Activated CD8-positive, alpha-beta T cell treated with anti-CD3 and anti-CD28 coated beads, Interleukin-2, amount 10 ng/mL, durations not matched to agents 7 days and 5 days (primary cell): ENCODE measurements at regions of chr17 and their contacts with region 1.

Region 1: GRCh38 chr17:36534840-36535668 is at the starts of genes MYO19 and PIGW:
- DNase-seq: peak; percentile 89
- ATAC-seq: peak; percentile 85
- H3K4me3 Mint-ChIP-seq: peak within 1 kb of the TSS; percentile 98
- H3K27ac Mint-ChIP-seq: peak within 1 kb of the TSS; percentile 99
- H3K4me1 Mint-ChIP-seq: peaks cover 47% of the 10 kb centered on the region
- H3K27me3 Mint-ChIP-seq: no peaks in the 10 kb centered on the region
- total RNA-seq, gene MYO19: 136 to 142 TPM
- total RNA-seq, gene PIGW: 8.0 to 11.7 TPM

Region 2: DNA sequence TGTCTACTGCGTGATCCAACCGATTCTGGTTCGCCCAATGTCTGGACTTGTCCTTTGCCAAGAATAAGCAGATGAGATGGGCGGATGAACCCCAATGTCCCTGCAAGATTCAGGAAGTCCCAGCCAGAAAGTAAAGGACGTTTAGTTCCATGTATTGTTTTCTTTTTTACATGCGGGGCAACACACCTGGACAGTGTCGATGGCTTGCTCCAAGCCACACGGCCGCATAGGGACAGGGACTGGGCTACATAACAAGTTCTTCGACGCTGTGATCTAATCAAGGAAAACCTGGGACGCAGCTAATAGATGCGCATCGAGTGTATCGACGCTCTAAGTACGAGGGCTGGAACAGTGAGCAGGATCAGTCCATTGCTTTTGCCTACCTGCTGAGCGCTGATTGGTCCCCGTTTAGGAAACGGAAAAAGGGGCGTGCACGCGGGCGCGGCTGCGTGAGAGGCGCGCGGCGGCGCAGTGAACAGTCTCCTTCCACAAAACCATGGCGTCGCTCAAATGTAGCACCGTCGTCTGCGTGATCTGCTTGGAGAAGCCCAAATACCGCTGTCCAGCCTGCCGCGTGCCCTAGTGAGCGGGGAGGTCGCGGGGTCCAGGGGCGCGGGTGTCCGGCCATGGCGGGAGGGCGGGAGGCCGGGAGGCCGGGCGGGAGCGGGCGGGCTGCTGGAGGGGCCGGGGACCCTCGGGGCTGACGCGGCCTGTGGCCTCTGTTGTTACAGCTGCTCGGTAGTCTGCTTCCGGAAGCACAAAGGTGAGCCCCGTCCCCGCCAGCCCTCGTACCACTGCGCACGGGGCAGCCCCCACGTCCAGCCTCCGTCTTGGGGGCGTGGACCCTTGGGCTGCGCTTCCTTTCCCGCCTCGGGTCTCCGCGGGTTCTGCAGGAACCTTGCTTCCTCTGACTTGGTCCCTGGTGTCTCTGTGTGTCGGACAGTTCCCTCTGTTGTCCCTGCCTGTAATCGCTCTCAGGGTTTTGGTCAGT is 48.6 kb before region 1 on chr17 and contains the start of gene ZNHIT3:
- CTCF ChIA-PET with region 1: no interaction called
- POLR2A ChIA-PET with region 1: interaction called, 13 read pairs
- DNase-seq: peak; percentile 95
- ATAC-seq: peak; percentile 95
- H3K4me3 Mint-ChIP-seq: peak within 1 kb of the TSS; percentile 99
- H3K27ac Mint-ChIP-seq: peak within 1 kb of the TSS; percentile 99
- H3K4me1 Mint-ChIP-seq: peaks cover 48% of the 10 kb centered on the region
- H3K27me3 Mint-ChIP-seq: peaks cover 10% of the 10 kb centered on the region
- total RNA-seq, gene ZNHIT3: 32.2 to 33.7 TPM

Region 3: DNA sequence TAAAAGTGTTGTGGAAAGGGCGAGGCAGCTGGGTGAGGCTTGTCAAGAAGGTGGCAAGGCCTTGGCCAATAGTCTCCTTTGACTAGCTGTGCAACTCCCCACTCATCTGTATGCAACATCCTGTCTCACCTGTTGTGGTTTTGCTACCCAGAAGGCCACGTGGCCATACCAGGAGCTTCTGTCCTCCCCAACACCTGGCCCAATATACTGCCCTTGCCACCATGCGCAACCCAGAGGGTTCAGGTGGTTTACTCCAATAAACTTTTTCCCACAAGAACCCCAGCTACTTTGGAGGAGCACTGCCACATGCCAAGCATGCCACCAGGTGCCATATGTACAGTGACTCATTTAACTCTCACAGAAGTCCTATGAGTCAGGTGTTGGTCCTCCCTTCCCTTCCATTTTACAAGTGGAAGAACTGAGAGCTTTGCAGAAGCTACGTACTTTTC is 10.6 kb before region 1 on chr17:
- CTCF ChIA-PET with region 1: interaction called, 10 read pairs
- POLR2A ChIA-PET with region 1: interaction called, 14 read pairs
- DNase-seq: no peak
- ATAC-seq: no peak
- H3K4me3 Mint-ChIP-seq: no peak overlapping the region
- H3K27ac Mint-ChIP-seq: peak overlapping the region; percentile 41
- H3K4me1 Mint-ChIP-seq: peaks cover 19% of the 10 kb centered on the region
- H3K27me3 Mint-ChIP-seq: no peaks in the 10 kb centered on the region

Region 4: GRCh38 chr17:36545465-36546417 is 10.7 kb after region 1 on chr17:
- CTCF ChIA-PET with region 1: interaction called, 35 read pairs
- POLR2A ChIA-PET with region 1: interaction called, 84 read pairs
- DNase-seq: peak; percentile 96
- ATAC-seq: peak; percentile 83
- H3K4me3 Mint-ChIP-seq: peak overlapping the region; percentile 87
- H3K27ac Mint-ChIP-seq: peak overlapping the region; percentile 95
- H3K4me1 Mint-ChIP-seq: peaks cover 43% of the 10 kb centered on the region
- H3K27me3 Mint-ChIP-seq: no peaks in the 10 kb centered on the region